Activated CD8-positive, alpha-beta T cell treated with anti-CD3 and anti-CD28 coated beads for 36 hours (primary cell): ENCODE measurements at regions of chr14 and their contacts with region 1.

Region 1: DNA sequence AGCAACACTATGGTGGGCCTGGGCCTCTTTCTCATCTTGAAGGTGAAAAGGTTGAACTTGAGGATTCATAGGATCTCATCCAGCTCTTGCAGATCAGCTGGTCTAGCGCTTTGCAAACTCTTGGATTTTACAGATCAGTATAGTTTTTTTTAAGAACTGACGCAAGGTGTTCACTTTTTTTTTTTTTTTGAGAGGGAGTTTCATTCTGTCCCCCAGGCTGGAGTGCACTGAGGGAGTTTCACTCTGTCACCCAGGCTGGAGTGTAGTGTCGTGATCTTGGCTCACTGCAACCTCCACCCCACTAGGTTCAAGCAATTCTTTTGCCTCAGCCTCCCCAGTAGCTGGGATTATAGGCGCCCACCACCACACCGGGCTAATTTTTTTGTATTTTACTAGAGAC is 20.4 kb upstream of the LGMN start:
- DNase-seq: no peak
- ATAC-seq: no peak
- H3K4me3 Mint-ChIP-seq: no peak overlapping the region
- H3K27ac Mint-ChIP-seq: no peak overlapping the region
- H3K4me1 Mint-ChIP-seq: peaks cover 18% of the 10 kb centered on the region
- H3K27me3 Mint-ChIP-seq: peaks cover 11% of the 10 kb centered on the region
- CTCF ChIP-seq: no peak

Region 2: GRCh38 chr14:92704036-92704804 is 64.6 kb before region 1 on chr14:
- CTCF ChIA-PET with region 1: no interaction called
- POLR2A ChIA-PET with region 1: no interaction called
- intact Hi-C with region 1: no loop called
- DNase-seq: no peak
- ATAC-seq: no peak
- H3K4me3 Mint-ChIP-seq: no peak overlapping the region
- H3K27ac Mint-ChIP-seq: no peak overlapping the region
- H3K4me1 Mint-ChIP-seq: peaks cover 3% of the 10 kb centered on the region
- H3K27me3 Mint-ChIP-seq: peaks cover 1% of the 10 kb centered on the region
- CTCF ChIP-seq: no peak

Region 3: GRCh38 chr14:92729626-92730358 is 39.0 kb before region 1 on chr14:
- CTCF ChIA-PET with region 1: no interaction called
- POLR2A ChIA-PET with region 1: interaction called, 3 read pairs
- intact Hi-C with region 1: loop called (anchors 5 kb)
- DNase-seq: peak; percentile 69
- ATAC-seq: peak; percentile 50
- H3K4me3 Mint-ChIP-seq: peak overlapping the region; percentile 20
- H3K27ac Mint-ChIP-seq: no peak overlapping the region
- H3K4me1 Mint-ChIP-seq: peaks cover 16% of the 10 kb centered on the region
- H3K27me3 Mint-ChIP-seq: peaks cover 3% of the 10 kb centered on the region
- CTCF ChIP-seq: no peak

Region 4: GRCh38 chr14:92756446-92756845 is 12.3 kb before region 1 on chr14:
- CTCF ChIA-PET with region 1: no interaction called
- POLR2A ChIA-PET with region 1: no interaction called
- intact Hi-C with region 1: no loop called
- DNase-seq: no peak
- ATAC-seq: no peak
- H3K4me3 Mint-ChIP-seq: no peak overlapping the region
- H3K27ac Mint-ChIP-seq: no peak overlapping the region
- H3K4me1 Mint-ChIP-seq: peaks cover 24% of the 10 kb centered on the region
- H3K27me3 Mint-ChIP-seq: peaks cover 10% of the 10 kb centered on the region
- CTCF ChIP-seq: no peak